Ovary (tissue), 10 donors: ENCODE measurements at regions of chr9 and their contacts with region 1.

Region 1: GRCh38 chr9:84101964-84102632 is 121.5 kb downstream of the RMI1 start:
- DNase-seq: no peak
- H3K4me3 ChIP-seq: no peak overlapping the region
- H3K27ac ChIP-seq: no peak overlapping the region
- H3K4me1 ChIP-seq: no peaks in the 10 kb centered on the region
- H3K27me3 ChIP-seq: no peaks in the 10 kb centered on the region
- CTCF ChIP-seq: no peak
- EP300 ChIP-seq: no peak
- POLR2A ChIP-seq: no peak

Region 2: DNA sequence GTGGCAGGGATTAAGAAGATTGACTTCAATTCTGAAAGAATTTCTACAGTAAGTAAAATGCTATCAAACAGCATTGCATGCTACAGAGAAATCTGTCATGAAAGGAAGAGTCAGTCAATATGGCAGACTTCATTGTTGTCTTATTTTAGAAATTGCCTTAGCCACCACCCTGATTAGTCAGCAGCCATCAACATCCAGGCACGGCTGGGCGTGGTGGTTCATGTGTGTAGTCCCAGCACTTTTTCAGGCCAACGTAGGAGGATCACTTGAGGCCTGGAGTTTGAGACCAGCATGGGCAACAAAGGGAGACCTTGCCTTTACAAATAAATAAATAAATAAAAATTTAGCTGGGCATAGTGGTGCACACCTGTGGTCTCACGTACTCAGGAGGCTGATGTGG is 74.9 kb before region 1 on chr9:
- intact Hi-C with region 1: loop called in 1 of 4 experiments (anchors 10 kb)
- DNase-seq: no peak
- H3K4me3 ChIP-seq: no peak overlapping the region
- H3K27ac ChIP-seq: no peak overlapping the region
- H3K4me1 ChIP-seq: no peaks in the 10 kb centered on the region
- H3K27me3 ChIP-seq: no peaks in the 10 kb centered on the region
- CTCF ChIP-seq: no peak
- EP300 ChIP-seq: no peak
- POLR2A ChIP-seq: no peak

Region 3: DNA sequence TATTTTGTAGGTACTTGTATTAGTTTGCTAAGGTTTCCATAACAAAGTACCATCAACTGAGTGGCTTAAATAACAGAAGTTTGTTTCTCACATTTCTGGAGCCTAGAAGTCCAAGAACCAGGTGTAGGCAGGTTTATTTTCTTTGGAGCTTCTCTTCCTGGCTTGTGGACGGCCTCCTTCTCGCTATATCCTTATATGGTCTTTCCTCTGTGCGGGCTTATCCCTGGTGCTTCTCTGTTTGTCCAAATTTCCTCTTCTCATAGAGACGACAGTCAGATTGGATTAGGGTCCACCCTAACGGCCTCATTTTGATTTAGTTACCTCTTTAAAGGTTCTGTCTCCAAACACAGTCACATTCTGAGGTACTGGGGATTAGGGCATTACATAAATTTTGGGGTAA is 33.2 kb before region 1 on chr9:
- intact Hi-C with region 1: no loop called
- DNase-seq: no peak
- H3K4me3 ChIP-seq: no peak overlapping the region
- H3K27ac ChIP-seq: no peak overlapping the region
- H3K4me1 ChIP-seq: no peaks in the 10 kb centered on the region
- H3K27me3 ChIP-seq: no peaks in the 10 kb centered on the region
- CTCF ChIP-seq: no peak
- EP300 ChIP-seq: no peak
- POLR2A ChIP-seq: no peak